CD4-positive, alpha-beta memory T cell (primary cell): ENCODE measurements at regions of chr2 and their contacts with region 1.

Region 1: GRCh38 chr2:39124000-39124745 is 3.3 kb upstream of the SOS1 start:
- DNase-seq: peak; percentile 92 to 97 (median 94)
- H3K4me3 ChIP-seq: peak overlapping the region; percentile 82 to 99
- H3K4me3 Mint-ChIP-seq: peak overlapping the region; percentile 88 to 96 (median 94)
- H3K27ac ChIP-seq: peak overlapping the region; percentile 92
- H3K27ac Mint-ChIP-seq: peak overlapping the region; percentile 91 to 96 (median 94)
- H3K4me1 ChIP-seq: peaks cover 59% of the 10 kb centered on the region
- H3K4me1 Mint-ChIP-seq: peaks cover 29 to 75% (median 53%) of the 10 kb centered on the region in 4 donors
- H3K27me3 ChIP-seq: no peaks in the 10 kb centered on the region
- H3K27me3 Mint-ChIP-seq: no peaks in the 10 kb centered on the region

Region 2: GRCh38 chr2:38740851-38741731 is 383.1 kb before region 1 on chr2:
- CTCF ChIA-PET with region 1: no interaction called
- POLR2A ChIA-PET with region 1: no interaction called
- intact Hi-C with region 1: no loop called
- DNase-seq: peak; percentile 60 to 71 (median 65)
- H3K4me3 ChIP-seq: no peak overlapping the region
- H3K4me3 Mint-ChIP-seq: peak overlapping the region in 4 of 8 donors; percentile 15 to 39 (median 27)
- H3K27ac ChIP-seq: no peak overlapping the region
- H3K27ac Mint-ChIP-seq: peak overlapping the region; percentile 30 to 99 (median 83)
- H3K4me1 ChIP-seq: peaks cover 54% of the 10 kb centered on the region
- H3K4me1 Mint-ChIP-seq: peaks cover 31 to 78% (median 44%) of the 10 kb centered on the region in 4 donors
- H3K27me3 ChIP-seq: no peaks in the 10 kb centered on the region
- H3K27me3 Mint-ChIP-seq: no peaks in the 10 kb centered on the region

Region 3: GRCh38 chr2:38791744-38792143 is 332.4 kb before region 1 on chr2:
- CTCF ChIA-PET with region 1: no interaction called
- POLR2A ChIA-PET with region 1: no interaction called
- intact Hi-C with region 1: no loop called
- DNase-seq: no peak
- H3K4me3 ChIP-seq: no peak overlapping the region
- H3K4me3 Mint-ChIP-seq: no peak overlapping the region
- H3K27ac ChIP-seq: no peak overlapping the region
- H3K27ac Mint-ChIP-seq: no peak overlapping the region
- H3K4me1 ChIP-seq: no peaks in the 10 kb centered on the region
- H3K4me1 Mint-ChIP-seq: no peaks in the 10 kb centered on the region
- H3K27me3 ChIP-seq: no peaks in the 10 kb centered on the region
- H3K27me3 Mint-ChIP-seq: no peaks in the 10 kb centered on the region

Region 4: DNA sequence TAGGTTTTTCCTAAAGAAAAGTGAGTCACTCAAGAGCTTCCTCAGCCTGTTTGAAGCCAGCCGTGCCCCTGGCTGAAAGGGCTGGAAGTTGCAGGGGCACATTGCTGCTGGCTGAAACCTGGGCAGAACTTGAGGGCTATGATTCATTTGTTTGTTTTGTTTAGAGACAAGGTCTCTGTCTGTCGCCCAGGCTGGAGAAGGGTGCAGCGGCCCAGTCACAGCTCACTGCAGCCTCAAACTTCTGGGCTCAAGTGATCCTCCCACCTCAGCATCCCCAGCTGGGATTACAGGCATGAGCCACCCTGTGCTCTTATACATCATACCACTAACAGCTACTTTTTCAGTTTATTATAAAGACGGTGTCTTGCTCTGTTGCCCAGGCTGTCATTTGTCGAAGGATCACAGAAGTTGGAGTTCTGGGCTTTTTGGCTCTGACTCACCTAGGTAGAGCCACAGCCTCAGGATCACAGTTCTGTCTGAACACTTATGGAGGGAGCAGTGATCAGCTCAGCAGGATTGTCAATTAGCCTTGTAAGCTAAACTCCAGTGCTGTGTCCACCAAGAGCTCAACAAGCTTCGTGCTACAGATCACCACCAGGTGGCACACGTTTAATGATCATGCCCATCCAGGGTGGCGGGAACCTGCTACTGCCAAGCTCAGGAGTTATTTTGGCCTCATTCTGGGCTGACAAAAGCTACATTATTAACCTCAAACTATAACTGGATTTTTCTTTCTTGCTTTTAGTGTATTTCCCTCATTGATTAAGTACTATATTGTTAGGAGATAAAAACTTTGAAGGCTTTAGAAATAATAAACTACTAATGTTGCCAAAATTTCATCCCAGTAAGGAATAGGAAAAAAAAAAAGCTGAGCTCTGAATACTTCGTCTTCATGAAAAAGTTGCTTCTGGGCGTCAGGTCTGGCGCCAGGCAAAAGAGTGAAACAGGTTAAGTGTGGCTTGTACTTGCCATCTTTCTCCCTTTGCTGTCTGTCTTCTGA is 176.6 kb before region 1 on chr2:
- CTCF ChIA-PET with region 1: interaction called, 18 read pairs
- POLR2A ChIA-PET with region 1: no interaction called
- intact Hi-C with region 1: loop called (anchors 2 kb)
- DNase-seq: peak; percentile 44 to 60 (median 49)
- H3K4me3 ChIP-seq: no peak overlapping the region
- H3K4me3 Mint-ChIP-seq: no peak overlapping the region
- H3K27ac ChIP-seq: no peak overlapping the region
- H3K27ac Mint-ChIP-seq: no peak overlapping the region
- H3K4me1 ChIP-seq: no peaks in the 10 kb centered on the region
- H3K4me1 Mint-ChIP-seq: no peaks in the 10 kb centered on the region
- H3K27me3 ChIP-seq: no peaks in the 10 kb centered on the region
- H3K27me3 Mint-ChIP-seq: peaks cover 0 to 2% of the 10 kb centered on the region in 2 donors

Region 5: DNA sequence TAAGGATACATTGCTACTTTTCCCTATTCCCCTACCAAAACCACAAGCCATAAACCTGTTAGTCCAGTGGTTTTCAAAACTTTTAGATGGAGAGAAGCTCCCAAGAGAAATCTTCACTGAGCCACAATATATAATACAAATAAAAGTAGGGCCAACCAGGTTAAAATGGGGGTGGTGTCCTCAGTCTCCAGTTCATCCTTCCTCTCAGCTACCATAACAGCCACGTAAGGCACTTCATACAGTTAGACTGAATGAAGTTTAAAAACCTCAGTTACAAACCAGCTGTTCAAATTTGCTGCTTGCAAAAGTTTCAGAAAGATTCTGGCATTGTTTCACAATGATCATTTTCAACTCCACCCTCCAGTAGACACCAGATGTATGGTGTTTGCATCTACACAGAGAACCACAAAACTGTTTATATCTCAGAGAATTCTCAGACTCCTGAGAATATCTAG is 29.3 kb before region 1 on chr2:
- CTCF ChIA-PET with region 1: no interaction called
- POLR2A ChIA-PET with region 1: interaction called, 12 read pairs
- intact Hi-C with region 1: no loop called
- DNase-seq: no peak
- H3K4me3 ChIP-seq: no peak overlapping the region
- H3K4me3 Mint-ChIP-seq: peak overlapping the region in 7 of 8 donors; percentile 2 to 67 (median 9)
- H3K27ac ChIP-seq: no peak overlapping the region
- H3K27ac Mint-ChIP-seq: peak overlapping the region in 6 of 7 donors; percentile 1 to 60 (median 16)
- H3K4me1 ChIP-seq: peaks cover 50% of the 10 kb centered on the region
- H3K4me1 Mint-ChIP-seq: peaks cover 50 to 71% (median 60%) of the 10 kb centered on the region in 4 donors
- H3K27me3 ChIP-seq: no peaks in the 10 kb centered on the region
- H3K27me3 Mint-ChIP-seq: no peaks in the 10 kb centered on the region

Region 6: GRCh38 chr2:39107156-39107555 is 17.0 kb before region 1 on chr2:
- CTCF ChIA-PET with region 1: interaction called, 3 read pairs
- POLR2A ChIA-PET with region 1: interaction called, 30 read pairs
- intact Hi-C with region 1: loop called (anchors 2 kb)
- DNase-seq: no peak
- H3K4me3 ChIP-seq: no peak overlapping the region
- H3K4me3 Mint-ChIP-seq: peak overlapping the region in 3 of 8 donors; percentile 45 to 57 (median 53)
- H3K27ac ChIP-seq: no peak overlapping the region
- H3K27ac Mint-ChIP-seq: peak overlapping the region in 6 of 7 donors; percentile 43 to 83 (median 70)
- H3K4me1 ChIP-seq: peaks cover 72% of the 10 kb centered on the region
- H3K4me1 Mint-ChIP-seq: peaks cover 46 to 91% (median 66%) of the 10 kb centered on the region in 4 donors
- H3K27me3 ChIP-seq: no peaks in the 10 kb centered on the region
- H3K27me3 Mint-ChIP-seq: no peaks in the 10 kb centered on the region

Region 7: GRCh38 chr2:39141331-39142271 is 17.4 kb after region 1 on chr2:
- CTCF ChIA-PET with region 1: interaction called, 12 read pairs
- POLR2A ChIA-PET with region 1: interaction called, 74 read pairs
- intact Hi-C with region 1: no loop called
- DNase-seq: peak in 4 of 5 donors; percentile 18 to 57 (median 46)
- H3K4me3 ChIP-seq: no peak overlapping the region
- H3K4me3 Mint-ChIP-seq: peak overlapping the region in 7 of 8 donors; percentile 47 to 75 (median 61)
- H3K27ac ChIP-seq: peak overlapping the region; percentile 29
- H3K27ac Mint-ChIP-seq: peak overlapping the region; percentile 62 to 93 (median 88)
- H3K4me1 ChIP-seq: peaks cover 69% of the 10 kb centered on the region
- H3K4me1 Mint-ChIP-seq: peaks cover 35 to 66% (median 50%) of the 10 kb centered on the region in 4 donors
- H3K27me3 ChIP-seq: no peaks in the 10 kb centered on the region
- H3K27me3 Mint-ChIP-seq: no peaks in the 10 kb centered on the region

Region 8: DNA sequence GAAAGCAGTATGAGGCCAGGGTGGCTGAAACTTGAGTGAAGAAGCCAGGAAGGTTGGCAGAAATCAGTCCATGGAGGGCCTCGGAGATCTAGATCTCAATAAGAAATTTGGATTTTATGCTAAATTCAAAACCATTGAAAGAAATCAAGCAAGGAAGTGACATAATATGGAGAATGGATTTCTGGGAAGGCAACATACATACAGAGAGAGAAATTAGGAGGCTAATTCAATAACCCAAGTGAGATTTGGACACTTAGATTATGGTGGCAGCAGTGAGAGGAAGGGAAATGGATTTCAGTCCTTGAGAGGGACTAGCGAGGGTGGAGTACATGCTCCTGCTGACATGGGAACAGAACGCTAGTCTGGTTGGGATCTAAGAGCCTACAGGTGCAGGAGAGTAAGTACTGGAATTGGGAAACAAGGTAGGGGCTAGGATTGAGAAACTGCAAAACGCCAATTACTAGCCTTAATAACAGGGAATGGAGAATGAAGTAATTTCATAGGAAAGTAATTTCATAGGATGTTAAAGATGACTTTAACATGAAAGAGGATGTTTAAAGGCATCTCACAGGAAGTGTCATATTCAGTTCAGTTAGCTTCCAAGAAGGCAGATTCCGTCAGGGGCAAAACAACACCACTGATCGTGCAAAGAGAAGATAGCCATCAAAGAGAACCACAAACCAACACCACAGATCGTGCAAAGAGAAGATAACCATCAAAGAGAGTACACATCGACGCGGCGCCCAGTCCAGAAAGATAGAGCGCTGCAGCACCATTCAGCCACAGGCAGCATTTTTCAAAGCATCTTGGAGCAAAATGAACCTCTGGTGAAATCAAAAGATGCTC is 92.4 kb after region 1 on chr2:
- CTCF ChIA-PET with region 1: interaction called, 19 read pairs
- POLR2A ChIA-PET with region 1: interaction called, 185 read pairs
- intact Hi-C with region 1: loop called (anchors 1 kb)
- DNase-seq: peak; percentile 87 to 92 (median 89)
- H3K4me3 ChIP-seq: peak overlapping the region in 1 of 2 donors; percentile 25
- H3K4me3 Mint-ChIP-seq: peak overlapping the region; percentile 36 to 72 (median 63)
- H3K27ac ChIP-seq: peak overlapping the region; percentile 65
- H3K27ac Mint-ChIP-seq: peak overlapping the region; percentile 63 to 96 (median 91)
- H3K4me1 ChIP-seq: peaks cover 58% of the 10 kb centered on the region
- H3K4me1 Mint-ChIP-seq: peaks cover 38 to 60% (median 52%) of the 10 kb centered on the region in 4 donors
- H3K27me3 ChIP-seq: no peaks in the 10 kb centered on the region
- H3K27me3 Mint-ChIP-seq: no peaks in the 10 kb centered on the region